ENCODE measurements at regions of chr15 and their contacts with region 1.

Region 1: DNA sequence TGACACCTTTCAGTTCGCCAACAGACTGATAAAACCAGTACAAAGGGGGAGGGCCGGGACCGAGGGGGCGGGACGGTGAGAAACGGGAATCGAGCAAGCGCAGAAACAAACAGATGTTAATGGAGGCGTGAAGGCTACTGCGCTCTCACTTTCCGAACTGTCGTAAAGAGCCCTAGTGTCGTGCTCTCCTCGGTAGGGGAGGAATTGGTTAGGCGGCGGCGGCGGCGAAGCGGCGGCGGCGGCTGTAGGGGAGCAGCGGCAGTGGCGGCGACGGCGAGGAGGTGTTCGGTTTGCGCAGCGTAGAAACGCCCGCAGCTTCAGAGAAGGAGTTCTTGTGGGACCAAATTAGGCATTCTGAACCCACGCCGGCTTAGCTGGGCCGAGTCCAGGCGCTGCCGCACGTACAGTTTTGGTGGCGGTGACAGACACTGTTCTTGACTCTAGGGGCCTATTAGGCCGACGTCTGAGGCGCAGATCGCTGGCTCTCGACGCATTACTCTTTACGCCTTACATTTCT is at the start of gene RNF111:
- DNase-seq: peak; percentile 84 to 90
- ATAC-seq: peak; percentile 97 to 98 (median 98)
- H3K4me3 ChIP-seq: peak within 1 kb of the TSS; percentile 75
- H3K27ac ChIP-seq: peak within 1 kb of the TSS; percentile 89
- H3K4me1 ChIP-seq: peaks cover 28% of the 10 kb centered on the region
- H3K27me3 ChIP-seq: no peaks in the 10 kb centered on the region
- CTCF ChIP-seq: no peak
- total RNA-seq, gene RNF111: 18.3 to 26.9 (median 23.2) TPM

Region 2: DNA sequence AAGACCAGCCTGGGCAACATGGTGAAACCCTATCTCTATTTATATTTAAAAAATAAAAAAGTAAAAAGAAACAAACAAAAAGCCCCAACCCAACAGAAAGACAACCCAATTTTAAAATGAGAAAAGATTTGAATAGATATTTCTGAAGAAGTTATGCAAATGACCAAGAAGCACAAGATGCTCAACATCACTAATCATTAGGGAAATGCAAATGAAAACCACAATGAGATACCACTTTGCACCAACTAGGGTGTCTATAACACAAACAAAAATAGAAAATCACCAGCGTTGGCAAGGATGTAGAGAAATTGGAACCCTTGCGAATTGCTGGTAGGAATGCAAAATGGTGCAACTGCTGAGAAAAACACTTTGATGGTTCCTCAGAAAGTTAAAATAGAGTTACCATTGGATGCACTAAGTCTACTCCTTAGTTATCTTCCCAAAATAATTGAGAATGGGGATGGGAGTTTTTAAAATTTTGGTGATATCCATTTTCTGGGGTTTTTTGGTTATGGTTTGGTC is 71.6 kb after region 1 on chr15:
- intact Hi-C with region 1: loop called in 1 of 2 experiments (anchors 5 kb)
- DNase-seq: no peak
- ATAC-seq: peak; percentile 29 to 63 (median 50)
- H3K4me3 ChIP-seq: no peak overlapping the region
- H3K27ac ChIP-seq: peak overlapping the region; percentile 30
- H3K4me1 ChIP-seq: peaks cover 17% of the 10 kb centered on the region
- H3K27me3 ChIP-seq: no peaks in the 10 kb centered on the region
- CTCF ChIP-seq: no peak

Region 3: GRCh38 chr15:59174835-59175831 is 187.6 kb after region 1 on chr15:
- intact Hi-C with region 1: loop called in 1 of 2 experiments (anchors 10 kb)
- DNase-seq: peak; percentile 42 to 56
- ATAC-seq: peak; percentile 75 to 87 (median 82)
- H3K4me3 ChIP-seq: no peak overlapping the region
- H3K27ac ChIP-seq: peak overlapping the region; percentile 6
- H3K4me1 ChIP-seq: peaks cover 16% of the 10 kb centered on the region
- H3K27me3 ChIP-seq: no peaks in the 10 kb centered on the region
- CTCF ChIP-seq: peak; percentile 54

Measured in psoas muscle (tissue), 8 donors.